PC-3 (cell line): ENCODE measurements at regions of chr5 and their contacts with region 1.

Region 1: GRCh38 chr5:36305571-36306326 is 4.0 kb upstream of the RANBP3L start:
- DNase-seq: peak; percentile 63
- ATAC-seq: peak; percentile 65
- H3K4me3 ChIP-seq: no peak overlapping the region
- H3K27ac ChIP-seq: no peak overlapping the region
- H3K4me1 ChIP-seq: peaks cover 19% of the 10 kb centered on the region
- H3K27me3 ChIP-seq: peaks cover 21% of the 10 kb centered on the region
- CTCF ChIP-seq: peak; percentile 90

Region 2: GRCh38 chr5:36054647-36055046 is 251.1 kb before region 1 on chr5:
- CTCF ChIA-PET with region 1: no interaction called
- POLR2A ChIA-PET with region 1: no interaction called
- intact Hi-C with region 1: no loop called
- DNase-seq: no peak
- ATAC-seq: no peak
- H3K4me3 ChIP-seq: no peak overlapping the region
- H3K27ac ChIP-seq: no peak overlapping the region
- H3K4me1 ChIP-seq: peaks cover 2% of the 10 kb centered on the region
- H3K27me3 ChIP-seq: peaks cover 11% of the 10 kb centered on the region
- CTCF ChIP-seq: no peak

Region 3: DNA sequence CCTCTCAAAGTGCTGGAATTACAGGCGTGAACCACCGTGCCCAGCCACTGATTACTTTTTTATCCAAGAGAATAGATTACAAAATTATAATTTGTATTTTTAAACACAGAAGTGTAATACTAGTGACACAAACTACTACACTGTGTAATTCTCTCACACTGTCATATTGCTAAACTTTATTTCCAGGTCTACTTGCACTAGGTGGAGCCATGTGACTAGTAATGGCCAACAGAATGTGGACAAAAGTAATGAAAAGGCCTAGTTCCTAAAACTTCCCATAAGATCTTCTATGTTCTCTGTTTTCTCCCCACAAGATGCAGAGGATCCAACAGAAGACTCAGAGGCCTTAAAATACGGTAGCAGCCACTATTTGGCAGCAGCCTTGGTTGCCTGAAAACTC is 91.3 kb before region 1 on chr5:
- CTCF ChIA-PET with region 1: no interaction called
- POLR2A ChIA-PET with region 1: no interaction called
- intact Hi-C with region 1: loop called (anchors 1 kb)
- DNase-seq: peak; percentile 8
- ATAC-seq: peak; percentile 43
- H3K4me3 ChIP-seq: no peak overlapping the region
- H3K27ac ChIP-seq: no peak overlapping the region
- H3K4me1 ChIP-seq: peaks cover 10% of the 10 kb centered on the region
- H3K27me3 ChIP-seq: no peaks in the 10 kb centered on the region
- CTCF ChIP-seq: peak; percentile 41; the same call in 1 of the 2 replicates

Region 4: GRCh38 chr5:36346896-36347690 is 41.3 kb after region 1 on chr5:
- CTCF ChIA-PET with region 1: no interaction called
- POLR2A ChIA-PET with region 1: no interaction called
- intact Hi-C with region 1: no loop called
- DNase-seq: no peak
- ATAC-seq: no peak
- H3K4me3 ChIP-seq: no peak overlapping the region
- H3K27ac ChIP-seq: no peak overlapping the region
- H3K4me1 ChIP-seq: peaks cover 4% of the 10 kb centered on the region; the same call in 1 of the 2 replicates
- H3K27me3 ChIP-seq: 0 out of 2 replicates have a peak, but pooled peaks cover 6% of the 10 kb centered on the region
- CTCF ChIP-seq: no peak